ENCODE measurements at regions of chr9 and their contacts with region 1.

Region 1: DNA sequence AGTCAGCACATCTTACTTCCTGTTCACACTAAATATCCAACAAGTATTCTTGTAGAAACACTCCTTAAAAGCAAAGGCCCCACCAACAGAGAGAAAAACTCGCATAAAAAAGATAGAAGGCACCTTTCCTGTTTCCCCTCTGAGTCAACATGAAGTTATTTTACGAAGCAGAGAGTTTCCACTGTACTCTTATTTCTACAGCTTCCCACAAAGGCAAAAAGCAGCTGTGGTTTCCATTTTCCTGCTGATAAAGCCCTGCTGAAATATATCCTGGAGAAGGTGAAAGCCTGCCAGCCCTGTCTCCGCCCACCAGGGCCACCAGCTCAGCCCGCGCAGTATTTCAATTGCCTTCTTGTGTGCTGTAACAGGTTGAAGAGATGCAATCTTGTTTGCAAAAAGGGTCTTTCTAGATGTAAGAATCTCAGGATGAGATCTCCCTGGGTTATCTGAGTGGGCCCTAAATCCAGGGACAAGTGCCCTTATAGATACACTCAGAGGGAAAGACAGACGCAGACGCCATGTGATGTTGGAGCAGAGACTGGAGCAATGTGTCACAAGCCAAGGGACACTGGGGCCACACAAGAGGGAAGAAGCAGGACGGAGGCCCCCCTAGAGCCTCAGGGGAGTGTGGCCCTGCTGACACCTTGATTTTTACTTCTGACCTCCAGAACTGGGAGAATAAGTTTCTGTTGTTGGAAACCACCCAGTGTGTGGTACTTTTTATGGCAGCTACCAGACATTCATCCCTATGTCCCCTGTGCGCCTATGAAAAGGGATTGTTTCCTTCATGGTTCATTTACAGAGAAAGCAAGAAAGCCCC is 19.9 kb downstream of the SEMA4D start:
- DNase-seq: peak; percentile 47
- H3K4me3 Mint-ChIP-seq: peak overlapping the region; percentile 89
- H3K27ac Mint-ChIP-seq: peak overlapping the region; percentile 96
- H3K4me1 Mint-ChIP-seq: peaks cover 90% of the 10 kb centered on the region
- H3K27me3 Mint-ChIP-seq: no peaks in the 10 kb centered on the region

Region 2: DNA sequence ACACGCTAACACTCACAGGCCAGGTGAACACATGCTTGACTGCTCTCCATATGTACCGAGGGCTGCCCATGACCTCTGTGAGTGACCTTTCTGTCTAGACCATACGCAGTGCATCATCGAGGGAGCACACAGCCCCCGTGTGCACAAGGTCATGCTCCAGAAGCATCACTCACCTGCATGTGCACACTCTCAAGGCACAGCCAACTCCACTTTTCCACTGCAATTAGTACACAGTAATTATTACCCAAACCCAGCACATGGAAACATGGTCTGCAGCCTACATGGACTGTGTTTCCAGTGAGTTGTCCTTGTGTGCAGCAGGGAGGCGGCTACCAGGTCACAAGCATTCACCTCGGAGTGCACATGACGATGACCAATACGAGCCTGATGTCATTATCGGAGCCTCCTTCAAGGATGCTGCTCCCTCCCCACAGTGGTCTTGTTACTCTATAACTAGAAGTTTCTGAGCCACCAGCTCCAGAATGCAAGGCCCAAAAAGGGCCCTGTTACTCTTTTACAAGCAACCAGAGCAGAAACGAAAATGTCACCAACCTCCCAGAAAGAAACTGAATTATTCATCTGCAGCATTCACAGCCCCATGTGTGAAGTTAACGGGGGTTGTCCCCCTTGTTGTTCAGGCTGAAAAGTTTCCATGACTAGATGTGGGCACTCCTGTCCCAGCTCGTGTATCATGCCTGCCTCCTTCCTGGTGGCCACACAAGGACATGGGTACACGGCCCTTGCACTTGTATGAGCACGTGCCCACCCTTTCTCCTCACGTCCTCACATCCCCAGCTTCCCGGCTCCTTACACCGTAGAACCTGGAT is 11.4 kb before region 1 on chr9:
- intact Hi-C with region 1: loop called (anchors 1 kb)
- DNase-seq: peak; percentile 44
- H3K4me3 Mint-ChIP-seq: peak overlapping the region; percentile 73
- H3K27ac Mint-ChIP-seq: peak overlapping the region; percentile 98
- H3K4me1 Mint-ChIP-seq: peaks cover 93% of the 10 kb centered on the region
- H3K27me3 Mint-ChIP-seq: no peaks in the 10 kb centered on the region

Region 3: GRCh38 chr9:89489548-89490530 is 11.8 kb after region 1 on chr9:
- intact Hi-C with region 1: loop called (anchors 1 kb)
- DNase-seq: no peak
- H3K4me3 Mint-ChIP-seq: peak overlapping the region; percentile 75
- H3K27ac Mint-ChIP-seq: peak overlapping the region; percentile 85
- H3K4me1 Mint-ChIP-seq: peaks cover 96% of the 10 kb centered on the region
- H3K27me3 Mint-ChIP-seq: no peaks in the 10 kb centered on the region

Region 4: DNA sequence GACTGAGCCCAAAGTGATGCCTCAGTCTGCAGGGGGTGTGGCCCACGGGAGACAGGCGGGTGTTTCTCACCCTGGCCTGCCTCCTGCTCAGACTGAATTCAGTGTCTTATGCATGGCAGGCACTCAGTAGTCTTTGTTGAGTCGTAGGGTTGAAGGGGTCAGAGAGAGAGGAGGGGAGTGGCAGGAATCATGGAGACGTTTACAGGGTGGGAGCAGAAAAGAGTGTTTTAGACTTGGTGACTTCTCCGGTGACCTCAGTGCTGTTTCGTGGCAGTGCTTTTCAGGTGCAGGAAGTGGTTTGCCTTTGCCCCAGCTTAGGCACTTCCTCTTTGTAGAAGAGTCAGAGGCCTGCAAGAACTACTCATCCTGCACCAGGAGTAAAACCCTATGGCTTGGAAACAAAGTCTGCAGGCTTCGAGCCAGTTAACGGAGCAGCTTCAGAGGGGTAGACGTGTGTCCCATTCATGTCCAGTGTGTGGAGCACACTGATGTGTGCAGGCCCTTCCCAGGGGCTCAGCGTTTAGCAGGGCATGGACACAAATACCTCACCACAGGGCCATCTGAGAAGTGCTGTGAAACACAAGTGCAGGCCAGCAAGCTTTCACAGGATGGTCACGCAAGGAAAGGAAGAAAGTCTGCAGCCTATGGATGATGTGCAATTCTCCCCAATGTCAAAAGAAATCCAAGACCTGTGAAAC is 44.4 kb after region 1 on chr9:
- intact Hi-C with region 1: loop called (anchors 1 kb)
- DNase-seq: peak; percentile 77
- H3K4me3 Mint-ChIP-seq: peak overlapping the region; percentile 81
- H3K27ac Mint-ChIP-seq: peak overlapping the region; percentile 99
- H3K4me1 Mint-ChIP-seq: peaks cover 91% of the 10 kb centered on the region
- H3K27me3 Mint-ChIP-seq: no peaks in the 10 kb centered on the region

Region 5: DNA sequence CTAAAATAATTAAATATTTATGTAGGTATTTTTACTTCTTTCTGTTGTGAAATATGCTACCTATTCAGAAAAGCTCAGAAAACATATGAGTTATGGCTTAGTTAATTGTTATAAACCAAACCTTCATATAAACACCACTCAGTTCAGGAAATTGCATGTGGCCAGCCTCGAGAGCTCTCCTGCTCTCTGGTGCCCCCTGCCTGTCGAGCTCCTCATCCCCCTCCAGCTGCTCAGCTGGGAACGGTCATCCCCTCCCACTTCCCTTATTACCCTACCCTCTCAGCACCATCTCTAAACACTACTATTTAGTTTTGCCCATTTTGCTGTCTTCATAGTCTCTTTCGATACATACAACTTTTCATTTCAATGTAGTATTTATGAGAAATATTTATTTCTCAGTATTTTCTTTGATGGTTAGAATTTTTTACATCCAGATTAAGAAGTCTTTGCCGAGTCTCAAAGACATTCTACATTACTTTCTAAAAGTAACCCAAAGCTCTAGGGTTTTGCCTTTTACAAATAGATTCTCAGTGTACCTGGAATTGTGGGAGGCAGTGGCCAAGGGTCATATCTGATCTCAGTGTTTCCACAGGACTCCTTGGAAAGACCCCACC is 71.1 kb after region 1 on chr9:
- intact Hi-C with region 1: loop called (anchors 1 kb)
- DNase-seq: peak; percentile 73
- H3K4me3 Mint-ChIP-seq: no peak overlapping the region
- H3K27ac Mint-ChIP-seq: peak overlapping the region; percentile 29
- H3K4me1 Mint-ChIP-seq: peaks cover 30% of the 10 kb centered on the region
- H3K27me3 Mint-ChIP-seq: peaks cover 15% of the 10 kb centered on the region

Region 6: GRCh38 chr9:89623925-89624420 is 146.0 kb after region 1 on chr9:
- intact Hi-C with region 1: no loop called
- DNase-seq: no peak
- H3K4me3 Mint-ChIP-seq: no peak overlapping the region
- H3K27ac Mint-ChIP-seq: no peak overlapping the region
- H3K4me1 Mint-ChIP-seq: peaks cover 24% of the 10 kb centered on the region
- H3K27me3 Mint-ChIP-seq: peaks cover 7% of the 10 kb centered on the region

Measured in activated T-helper 1 cell treated with anti-CD3 and anti-CD28 coated beads, Interleukin-12 subunit alpha, Interleukin-12 subunit beta, Interleukin-2, Interleukin-4 antibody, amounts not matched to agents 30 ng/mL and 10 ng/mL and 1 ng/mL, durations not matched to agents 14 hours and 24 hours and 36 hours (primary cell).